Testis (tissue), 5 donors: ENCODE measurements at regions of chr4 and their contacts with region 1.

Region 1: DNA sequence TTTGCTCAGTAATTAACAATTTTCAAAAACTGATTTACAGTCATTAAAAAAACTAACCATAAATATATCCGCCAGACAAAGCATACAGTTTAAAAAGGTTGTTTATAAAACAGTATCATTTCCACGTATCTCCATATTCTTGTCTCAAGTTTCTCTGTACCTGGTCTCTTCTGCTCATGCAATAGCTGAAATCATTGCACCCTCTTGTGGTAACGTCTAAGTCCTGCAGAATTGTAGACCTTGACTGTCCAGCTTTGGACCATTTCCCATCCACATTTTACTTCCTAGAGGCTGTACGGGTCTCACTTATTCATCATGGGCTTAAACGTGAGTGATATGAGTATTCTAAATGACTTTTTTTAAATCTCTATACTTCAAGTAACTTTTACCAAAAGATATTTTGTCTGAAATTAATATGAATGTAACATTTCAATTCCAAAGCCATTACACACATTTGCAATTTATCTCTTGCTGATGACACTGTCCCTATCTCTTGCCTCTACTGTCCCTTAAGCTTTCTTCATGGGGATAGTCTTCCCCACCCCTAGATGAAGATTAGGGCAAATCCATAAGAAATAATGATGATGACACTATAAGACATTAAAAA is 118.5 kb downstream of the BTC start:
- DNase-seq: peak; percentile 25
- H3K4me3 ChIP-seq: no peak overlapping the region
- H3K27ac ChIP-seq: no peak overlapping the region
- H3K4me1 ChIP-seq: no peaks in the 10 kb centered on the region
- H3K27me3 ChIP-seq: no peaks in the 10 kb centered on the region
- CTCF ChIP-seq: peak in 2 of 3 experiments; percentile 49 to 58
- POLR2A ChIP-seq: no peak

Region 2: DNA sequence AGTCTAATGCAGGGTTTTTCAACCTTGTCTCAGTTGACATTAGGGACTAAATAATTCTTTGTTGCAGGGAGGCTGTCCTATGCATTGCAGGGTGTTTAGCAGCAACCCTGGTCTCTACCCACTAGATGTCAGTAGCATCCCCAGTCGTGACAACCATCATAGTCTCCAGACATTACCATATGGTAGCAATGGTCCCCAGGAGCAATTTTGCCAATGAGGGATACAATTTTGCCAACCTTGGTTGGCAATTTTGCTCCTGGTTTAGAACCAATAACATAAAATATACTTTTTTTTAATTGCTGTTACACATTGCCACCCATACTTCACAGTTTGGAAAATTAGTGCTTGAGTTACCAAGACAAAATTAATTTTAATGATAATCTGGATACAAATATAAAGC is 304.9 kb before region 1 on chr4:
- intact Hi-C with region 1: loop called (anchors 10 kb)
- DNase-seq: peak; percentile 24
- H3K4me3 ChIP-seq: no peak overlapping the region
- H3K27ac ChIP-seq: no peak overlapping the region
- H3K4me1 ChIP-seq: peaks cover under 1% of the 10 kb centered on the region
- H3K27me3 ChIP-seq: no peaks in the 10 kb centered on the region
- CTCF ChIP-seq: peak in 2 of 3 experiments; percentile 9 to 26
- POLR2A ChIP-seq: no peak

Region 3: DNA sequence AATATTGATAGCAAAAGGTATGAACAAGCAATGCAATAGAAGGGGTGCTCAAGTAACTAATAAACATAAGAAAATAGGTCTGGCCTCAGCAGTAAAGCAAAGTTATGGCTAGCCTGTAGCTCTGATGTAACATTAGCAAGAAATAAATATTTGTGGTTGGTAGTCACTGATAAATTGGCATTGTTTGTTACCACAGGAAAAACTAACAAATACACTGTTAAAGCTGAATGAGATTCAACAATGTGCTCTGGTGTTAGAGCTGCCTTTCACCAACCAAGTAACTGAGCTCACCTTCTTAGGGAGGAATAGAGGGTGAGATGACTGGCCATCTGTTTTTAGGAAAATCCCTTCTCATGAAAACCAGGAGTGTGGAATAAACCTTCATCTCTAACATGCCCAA is 159.5 kb before region 1 on chr4:
- intact Hi-C with region 1: no loop called
- DNase-seq: no peak
- H3K4me3 ChIP-seq: no peak overlapping the region
- H3K27ac ChIP-seq: no peak overlapping the region
- H3K4me1 ChIP-seq: no peaks in the 10 kb centered on the region
- H3K27me3 ChIP-seq: no peaks in the 10 kb centered on the region
- CTCF ChIP-seq: no peak
- POLR2A ChIP-seq: no peak